ENCODE measurements at regions of chr15 and their contacts with region 1.

Region 1: GRCh38 chr15:68559345-68560310 is 19.2 kb upstream of the CORO2B start:
- DNase-seq: peak; percentile 63 to 94
- H3K4me3 ChIP-seq: no peak overlapping the region
- CTCF ChIP-seq: peak in 1 of 3 donors; percentile 94
- POLR2A ChIP-seq: no peak

Region 2: GRCh38 chr15:68252925-68253534 is 306.6 kb before region 1 on chr15:
- intact Hi-C with region 1: loop called (anchors 10 kb)
- DNase-seq: no peak
- H3K4me3 ChIP-seq: no peak overlapping the region
- CTCF ChIP-seq: peak in 2 of 3 donors; percentile 19 to 69
- POLR2A ChIP-seq: no peak

Region 3: DNA sequence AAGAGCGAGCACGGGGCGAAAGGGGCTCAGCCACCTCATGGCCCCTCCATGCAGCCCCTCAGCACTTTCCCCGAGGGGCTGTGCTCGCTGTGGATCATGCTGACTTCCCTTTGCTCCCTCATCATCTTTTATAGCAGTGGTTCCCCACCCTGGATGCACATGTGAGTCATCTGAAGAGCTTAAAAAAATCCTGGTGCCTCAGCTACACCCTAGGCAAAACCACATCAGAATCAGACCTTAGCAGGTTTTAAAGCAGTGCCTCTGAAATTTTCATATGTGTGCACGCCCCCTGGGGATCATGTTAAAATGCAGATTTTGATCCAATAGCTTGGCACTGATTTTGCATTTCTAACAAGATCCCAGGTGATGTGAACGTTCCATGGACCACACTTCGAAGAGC is 231.2 kb before region 1 on chr15:
- intact Hi-C with region 1: loop called (anchors 10 kb)
- DNase-seq: no peak
- H3K4me3 ChIP-seq: no peak overlapping the region
- CTCF ChIP-seq: no peak
- POLR2A ChIP-seq: no peak

Region 4: DNA sequence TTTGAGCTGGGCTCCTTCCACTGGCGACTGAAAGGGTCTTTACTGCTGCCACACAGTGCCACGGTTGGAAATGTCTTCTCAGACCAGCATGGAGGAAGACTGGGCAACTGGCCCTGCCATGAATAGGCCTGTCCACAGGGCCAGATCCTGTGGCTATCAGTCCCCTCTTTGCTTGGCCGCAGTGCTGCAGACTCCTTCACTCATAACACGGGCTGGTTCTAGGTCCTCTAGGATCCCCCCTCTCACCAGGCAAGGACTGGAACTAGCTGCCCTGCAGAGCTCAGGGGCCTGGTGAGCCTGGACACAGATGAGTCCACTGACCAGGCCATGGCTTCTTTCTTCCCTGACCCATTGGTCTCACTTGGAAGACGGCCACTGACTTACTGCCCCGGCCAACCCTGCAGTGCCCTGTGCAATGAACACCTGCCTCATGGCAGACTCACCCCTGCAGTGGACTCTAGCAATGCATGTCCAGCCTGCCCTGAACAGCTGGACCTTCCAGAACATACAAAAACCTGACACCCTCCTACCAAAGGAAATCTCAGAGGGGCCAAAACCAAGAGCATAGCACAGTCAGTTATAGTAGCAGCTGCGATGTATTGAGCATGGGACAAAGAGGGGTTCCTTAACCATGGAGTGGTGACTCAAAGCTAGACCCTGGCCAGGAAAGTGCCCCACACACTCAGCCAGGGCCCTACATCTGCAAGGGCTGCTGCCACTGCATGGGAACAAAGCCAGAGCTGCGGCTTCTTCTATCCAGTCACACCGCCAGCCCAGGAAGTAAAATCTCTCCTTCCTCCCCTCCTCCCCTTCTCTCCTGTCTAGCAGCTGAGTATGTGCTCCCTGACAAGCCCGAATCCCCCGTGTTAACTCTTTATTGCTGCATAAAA is 55.6 kb before region 1 on chr15:
- intact Hi-C with region 1: no loop called
- DNase-seq: peak in 1 of 2 donors; percentile 66
- H3K4me3 ChIP-seq: no peak overlapping the region
- CTCF ChIP-seq: no peak
- POLR2A ChIP-seq: no peak

Region 5: DNA sequence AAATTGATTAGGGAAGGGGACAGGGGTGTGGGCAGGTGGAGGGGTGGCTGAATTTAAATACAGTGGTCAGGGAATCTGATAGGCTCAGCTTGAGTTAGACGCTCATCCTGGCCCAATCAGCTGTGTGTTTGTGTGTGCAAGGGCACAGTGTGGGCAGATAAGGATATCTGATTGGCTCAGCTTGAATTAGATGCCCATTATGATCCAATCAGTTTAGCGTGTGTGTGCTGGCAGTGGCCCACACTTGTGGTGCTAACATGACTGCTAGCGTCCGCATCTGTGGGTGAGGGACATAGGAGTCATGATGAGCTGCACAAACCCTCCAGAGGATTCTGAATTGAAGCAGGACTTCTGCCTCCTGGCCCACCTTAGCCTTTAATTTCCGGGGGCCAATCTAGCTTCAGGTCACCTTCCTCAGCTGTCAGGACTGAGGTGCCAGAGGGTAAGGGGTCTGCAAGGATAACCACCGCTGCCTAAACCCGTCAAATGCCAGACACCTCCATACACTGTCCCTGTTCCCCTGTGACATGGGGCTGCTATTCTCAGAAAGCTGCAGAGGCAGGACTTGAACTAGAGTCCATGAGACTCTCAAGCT is 116.5 kb after region 1 on chr15:
- intact Hi-C with region 1: loop called (anchors 2 kb)
- DNase-seq: peak in 1 of 2 donors; percentile 75
- H3K4me3 ChIP-seq: no peak overlapping the region
- CTCF ChIP-seq: no peak
- POLR2A ChIP-seq: no peak